Activated CD4-positive, alpha-beta T cell treated with anti-CD3 and anti-CD28 coated beads for 36 hours (primary cell): ENCODE measurements at regions of chr22 and their contacts with region 1.

Region 1: GRCh38 chr22:22195265-22196017 is 49.1 kb upstream of the VPREB1 start:
- DNase-seq: peak; percentile 92
- ATAC-seq: peak; percentile 94
- H3K4me3 Mint-ChIP-seq: no peak overlapping the region
- H3K27ac Mint-ChIP-seq: no peak overlapping the region
- H3K4me1 Mint-ChIP-seq: no peaks in the 10 kb centered on the region
- H3K27me3 Mint-ChIP-seq: peaks cover 13% of the 10 kb centered on the region

Region 2: GRCh38 chr22:21952586-21953571 is 242.6 kb before region 1 on chr22 and contains the start of gene PPM1F:
- CTCF ChIA-PET with region 1: no interaction called
- POLR2A ChIA-PET with region 1: no interaction called
- intact Hi-C with region 1: no loop called
- DNase-seq: peak; percentile 95
- ATAC-seq: peak; percentile 91
- H3K4me3 Mint-ChIP-seq: peak within 1 kb of the TSS; percentile 78
- H3K27ac Mint-ChIP-seq: peak within 1 kb of the TSS; percentile 70
- H3K4me1 Mint-ChIP-seq: peaks cover 11% of the 10 kb centered on the region
- H3K27me3 Mint-ChIP-seq: no peaks in the 10 kb centered on the region
- total RNA-seq, gene PPM1F: 23.6 to 27.7 TPM

Region 3: DNA sequence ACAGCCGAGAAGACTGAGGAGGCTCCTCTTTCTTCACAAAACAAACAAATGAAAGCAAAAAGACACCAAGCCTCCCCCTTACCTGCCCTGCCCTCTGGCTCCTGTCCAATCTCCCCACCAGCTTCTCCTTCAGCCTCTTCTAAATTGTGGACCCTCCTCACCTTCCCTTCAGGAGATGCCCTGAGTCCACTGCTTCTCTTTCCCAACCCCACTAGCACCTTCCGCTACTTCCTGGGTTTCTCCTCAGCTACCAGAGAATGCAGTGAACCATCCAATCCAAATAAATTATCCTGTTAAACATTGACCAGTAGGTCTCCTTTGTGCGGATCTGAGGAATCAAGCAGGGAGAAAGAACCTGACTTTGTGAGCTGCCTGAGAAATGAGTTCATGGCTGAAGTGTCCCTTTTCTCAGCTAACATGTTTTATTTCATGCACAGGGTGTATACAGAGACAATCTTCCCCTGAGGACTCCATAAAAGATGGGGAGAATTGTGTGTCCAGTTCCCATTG is 14.0 kb before region 1 on chr22:
- CTCF ChIA-PET with region 1: interaction called, 55 read pairs
- POLR2A ChIA-PET with region 1: no interaction called
- intact Hi-C with region 1: no loop called
- DNase-seq: no peak
- ATAC-seq: no peak
- H3K4me3 Mint-ChIP-seq: no peak overlapping the region
- H3K27ac Mint-ChIP-seq: no peak overlapping the region
- H3K4me1 Mint-ChIP-seq: no peaks in the 10 kb centered on the region
- H3K27me3 Mint-ChIP-seq: peaks cover 29% of the 10 kb centered on the region